Heart right ventricle (tissue), 16 donors: ENCODE measurements at regions of chrX and their contacts with region 1.

Region 1: GRCh38 chrX:43166872-43167271 is 388.9 kb upstream of the PPP1R2C start:
- DNase-seq: no peak
- ATAC-seq: no peak
- H3K4me3 ChIP-seq: no peak overlapping the region
- H3K27ac ChIP-seq: no peak overlapping the region
- H3K4me1 ChIP-seq: no peaks in the 10 kb centered on the region
- H3K27me3 ChIP-seq: peaks cover 0 to 10% (median 0%) of the 10 kb centered on the region in 7 donors
- CTCF ChIP-seq: no peak

Region 2: GRCh38 chrX:43188296-43188695 is 21.4 kb after region 1 on chrX:
- intact Hi-C with region 1: loop called in 1 of 10 experiments (anchors 1 kb)
- DNase-seq: no peak
- ATAC-seq: no peak
- H3K4me3 ChIP-seq: no peak overlapping the region
- H3K27ac ChIP-seq: no peak overlapping the region
- H3K4me1 ChIP-seq: no peaks in the 10 kb centered on the region
- H3K27me3 ChIP-seq: peaks cover 0 to 17% (median 0%) of the 10 kb centered on the region in 7 donors
- CTCF ChIP-seq: no peak

Region 3: GRCh38 chrX:43333543-43333942 is 166.7 kb after region 1 on chrX:
- intact Hi-C with region 1: no loop called
- DNase-seq: no peak
- ATAC-seq: no peak
- H3K4me3 ChIP-seq: no peak overlapping the region
- H3K27ac ChIP-seq: no peak overlapping the region
- H3K4me1 ChIP-seq: no peaks in the 10 kb centered on the region
- H3K27me3 ChIP-seq: no peaks in the 10 kb centered on the region
- CTCF ChIP-seq: peak in 1 of 9 donors; percentile 10